ENCODE measurements at regions of chr20 and their contacts with region 1.

Region 1: DNA sequence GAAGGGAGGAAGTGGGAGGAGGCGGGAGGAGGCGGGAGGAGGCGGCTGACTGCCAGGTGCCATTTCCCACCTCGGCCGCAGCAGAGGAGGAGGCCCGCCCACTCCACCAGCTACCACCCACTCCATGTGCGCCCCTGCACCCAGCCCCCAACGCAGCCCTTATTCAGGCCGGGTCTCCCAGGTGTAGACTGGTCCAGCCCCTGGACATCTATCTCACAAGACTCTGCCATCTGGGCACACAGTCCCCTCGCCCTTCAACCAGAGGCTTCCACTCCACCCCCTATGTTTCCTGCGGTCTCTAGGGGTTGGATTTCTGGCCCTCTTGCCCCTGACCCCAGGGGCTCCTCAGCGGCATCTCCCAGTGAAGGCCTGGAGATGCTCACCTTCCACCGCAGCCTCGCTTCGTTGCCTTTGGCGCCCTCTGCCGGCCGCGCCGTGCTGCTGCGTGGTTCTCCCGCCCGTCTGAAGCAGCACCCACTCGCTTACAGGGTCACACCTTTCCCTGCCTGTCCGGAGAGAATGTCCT is 32.6 kb upstream of the FAM83D start:
- DNase-seq: peak; percentile 88
- ATAC-seq: peak; percentile 79
- H3K4me3 ChIP-seq: no peak overlapping the region
- H3K4me3 Mint-ChIP-seq: peak overlapping the region; percentile 64
- H3K27ac ChIP-seq: peak overlapping the region; percentile 74 to 78
- H3K27ac Mint-ChIP-seq: peak overlapping the region; percentile 89
- H3K4me1 ChIP-seq: peaks cover 22 to 52% of the 10 kb centered on the region in 2 donors
- H3K4me1 Mint-ChIP-seq: peaks cover 57% of the 10 kb centered on the region
- H3K27me3 ChIP-seq: no peaks in the 10 kb centered on the region
- H3K27me3 Mint-ChIP-seq: no peaks in the 10 kb centered on the region
- CTCF ChIP-seq: peak; percentile 91

Region 2: DNA sequence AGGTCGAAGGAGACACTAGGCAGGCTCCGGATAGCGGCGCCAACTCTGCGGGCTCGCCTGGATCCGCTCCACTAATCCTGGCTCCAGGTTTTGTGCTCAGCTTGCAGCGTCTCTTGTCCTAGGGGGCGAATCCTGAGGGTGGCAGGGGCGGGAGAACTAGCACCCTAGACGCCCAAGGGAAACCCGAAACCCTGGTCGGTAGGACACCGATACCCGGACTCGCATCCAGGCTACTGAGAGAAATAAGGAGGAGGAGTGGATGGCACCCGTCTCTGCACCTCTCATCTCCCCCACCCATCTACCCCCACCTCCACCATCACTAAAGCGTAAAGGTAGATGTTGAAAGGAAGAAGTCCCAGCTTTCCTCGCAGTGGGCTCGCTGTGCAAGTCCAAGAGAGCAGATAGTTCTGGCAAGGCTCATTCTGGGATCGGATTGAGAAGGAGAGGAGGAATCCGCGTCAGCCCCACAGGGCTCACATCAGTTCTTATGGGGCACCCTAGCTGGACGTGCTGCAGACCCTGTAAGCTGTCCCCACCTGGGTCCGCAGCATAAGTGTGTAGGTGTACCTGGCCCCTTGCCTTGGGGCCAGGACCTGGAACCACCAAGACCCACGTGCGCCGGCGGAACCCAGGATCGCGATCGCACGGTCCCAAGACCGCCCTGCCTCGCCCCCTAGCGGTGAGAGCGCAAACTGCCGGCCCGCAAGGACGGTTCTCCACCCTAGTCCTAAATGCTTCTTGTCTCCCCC is 162.5 kb before region 1 on chr20:
- CTCF ChIA-PET with region 1: interaction called, 14 read pairs
- POLR2A ChIA-PET with region 1: no interaction called
- intact Hi-C with region 1: loop called (anchors 1 kb)
- DNase-seq: peak; percentile 81
- ATAC-seq: peak; percentile 76
- H3K4me3 ChIP-seq: peak overlapping the region in 4 of 5 experiments; percentile 18 to 40 (median 28)
- H3K4me3 Mint-ChIP-seq: peak overlapping the region; percentile 69
- H3K27ac ChIP-seq: no peak overlapping the region
- H3K27ac Mint-ChIP-seq: peak overlapping the region; percentile 77
- H3K4me1 ChIP-seq: peaks cover 59 to 74% of the 10 kb centered on the region in 2 donors
- H3K4me1 Mint-ChIP-seq: peaks cover 51% of the 10 kb centered on the region
- H3K27me3 ChIP-seq: peaks cover 0 to 97% (median 86%) of the 10 kb centered on the region in 4 experiments
- H3K27me3 Mint-ChIP-seq: peaks cover 89% of the 10 kb centered on the region
- CTCF ChIP-seq: peak; percentile 97

Region 3: DNA sequence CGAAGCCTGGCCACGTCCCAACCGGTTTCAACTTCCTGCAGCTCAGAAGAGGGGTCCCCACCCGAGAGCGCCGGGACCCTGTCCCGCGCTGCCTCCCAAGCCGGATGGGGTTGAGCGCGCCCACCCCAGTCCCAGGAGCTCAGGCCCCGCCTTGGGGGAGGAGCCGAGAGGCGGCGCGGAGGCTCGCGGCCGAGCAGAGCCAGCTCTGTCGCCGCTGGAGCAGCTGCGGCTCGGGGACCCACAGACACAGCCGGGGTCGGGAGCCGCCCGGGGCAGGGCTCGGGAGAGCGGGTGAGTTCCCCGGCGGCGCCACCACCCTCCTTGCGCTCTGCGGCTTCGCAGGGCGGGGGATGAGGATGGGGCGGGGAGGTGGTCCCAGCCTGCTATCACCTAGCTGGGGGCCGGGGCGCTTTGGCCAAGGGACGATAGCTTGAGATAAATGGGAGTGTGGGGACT is 88.1 kb before region 1 on chr20 and contains the start of gene PPP1R16B:
- CTCF ChIA-PET with region 1: interaction called, 141 read pairs
- POLR2A ChIA-PET with region 1: interaction called, 43 read pairs
- intact Hi-C with region 1: loop called (anchors 1 kb)
- DNase-seq: peak; percentile 85
- ATAC-seq: peak; percentile 75
- H3K4me3 ChIP-seq: peak within 1 kb of the TSS; percentile 17 to 99 (median 95)
- H3K4me3 Mint-ChIP-seq: peak within 1 kb of the TSS; percentile 95
- H3K27ac ChIP-seq: peak within 1 kb of the TSS; percentile 99
- H3K27ac Mint-ChIP-seq: peak within 1 kb of the TSS; percentile 96
- H3K4me1 ChIP-seq: peaks cover 49 to 55% of the 10 kb centered on the region in 2 donors
- H3K4me1 Mint-ChIP-seq: peaks cover 53% of the 10 kb centered on the region
- H3K27me3 ChIP-seq: no peaks in the 10 kb centered on the region
- H3K27me3 Mint-ChIP-seq: no peaks in the 10 kb centered on the region
- CTCF ChIP-seq: no peak
- total RNA-seq, gene PPP1R16B: 108 and 112 TPM in 2 replicates

Region 4: GRCh38 chr20:38825901-38826625 is 67.6 kb before region 1 on chr20:
- CTCF ChIA-PET with region 1: interaction called, 15 read pairs
- POLR2A ChIA-PET with region 1: no interaction called
- intact Hi-C with region 1: loop called (anchors 5 kb)
- DNase-seq: no peak
- ATAC-seq: no peak
- H3K4me3 ChIP-seq: no peak overlapping the region
- H3K4me3 Mint-ChIP-seq: no peak overlapping the region
- H3K27ac ChIP-seq: peak overlapping the region in 1 of 2 donors; percentile 60
- H3K27ac Mint-ChIP-seq: peak overlapping the region; percentile 51
- H3K4me1 ChIP-seq: peaks cover 39 to 42% of the 10 kb centered on the region in 2 donors
- H3K4me1 Mint-ChIP-seq: peaks cover 88% of the 10 kb centered on the region
- H3K27me3 ChIP-seq: no peaks in the 10 kb centered on the region
- H3K27me3 Mint-ChIP-seq: no peaks in the 10 kb centered on the region
- CTCF ChIP-seq: no peak

Region 5: GRCh38 chr20:38842558-38842981 is 51.1 kb before region 1 on chr20:
- CTCF ChIA-PET with region 1: interaction called, 114 read pairs
- POLR2A ChIA-PET with region 1: interaction called, 13 read pairs
- intact Hi-C with region 1: loop called (anchors 1 kb)
- DNase-seq: peak; percentile 95
- ATAC-seq: peak; percentile 99
- H3K4me3 ChIP-seq: peak overlapping the region in 2 of 5 experiments; percentile 12 to 48
- H3K4me3 Mint-ChIP-seq: peak overlapping the region; percentile 83
- H3K27ac ChIP-seq: peak overlapping the region; percentile 92 to 96
- H3K27ac Mint-ChIP-seq: peak overlapping the region; percentile 99
- H3K4me1 ChIP-seq: peaks cover 79 to 88% of the 10 kb centered on the region in 2 donors
- H3K4me1 Mint-ChIP-seq: peaks cover 88% of the 10 kb centered on the region
- H3K27me3 ChIP-seq: no peaks in the 10 kb centered on the region
- H3K27me3 Mint-ChIP-seq: no peaks in the 10 kb centered on the region
- CTCF ChIP-seq: no peak

Region 6: GRCh38 chr20:38863024-38863851 is 30.4 kb before region 1 on chr20:
- CTCF ChIA-PET with region 1: interaction called, 84 read pairs
- POLR2A ChIA-PET with region 1: interaction called, 4 read pairs
- intact Hi-C with region 1: loop called (anchors 1 kb)
- DNase-seq: peak; percentile 91
- ATAC-seq: peak; percentile 78
- H3K4me3 ChIP-seq: peak overlapping the region in 4 of 5 experiments; percentile 15 to 39 (median 18)
- H3K4me3 Mint-ChIP-seq: peak overlapping the region; percentile 68
- H3K27ac ChIP-seq: peak overlapping the region; percentile 97
- H3K27ac Mint-ChIP-seq: peak overlapping the region; percentile 86
- H3K4me1 ChIP-seq: peaks cover 83 to 98% of the 10 kb centered on the region in 2 donors
- H3K4me1 Mint-ChIP-seq: peaks cover 90% of the 10 kb centered on the region
- H3K27me3 ChIP-seq: no peaks in the 10 kb centered on the region
- H3K27me3 Mint-ChIP-seq: no peaks in the 10 kb centered on the region
- CTCF ChIP-seq: no peak

Region 7: DNA sequence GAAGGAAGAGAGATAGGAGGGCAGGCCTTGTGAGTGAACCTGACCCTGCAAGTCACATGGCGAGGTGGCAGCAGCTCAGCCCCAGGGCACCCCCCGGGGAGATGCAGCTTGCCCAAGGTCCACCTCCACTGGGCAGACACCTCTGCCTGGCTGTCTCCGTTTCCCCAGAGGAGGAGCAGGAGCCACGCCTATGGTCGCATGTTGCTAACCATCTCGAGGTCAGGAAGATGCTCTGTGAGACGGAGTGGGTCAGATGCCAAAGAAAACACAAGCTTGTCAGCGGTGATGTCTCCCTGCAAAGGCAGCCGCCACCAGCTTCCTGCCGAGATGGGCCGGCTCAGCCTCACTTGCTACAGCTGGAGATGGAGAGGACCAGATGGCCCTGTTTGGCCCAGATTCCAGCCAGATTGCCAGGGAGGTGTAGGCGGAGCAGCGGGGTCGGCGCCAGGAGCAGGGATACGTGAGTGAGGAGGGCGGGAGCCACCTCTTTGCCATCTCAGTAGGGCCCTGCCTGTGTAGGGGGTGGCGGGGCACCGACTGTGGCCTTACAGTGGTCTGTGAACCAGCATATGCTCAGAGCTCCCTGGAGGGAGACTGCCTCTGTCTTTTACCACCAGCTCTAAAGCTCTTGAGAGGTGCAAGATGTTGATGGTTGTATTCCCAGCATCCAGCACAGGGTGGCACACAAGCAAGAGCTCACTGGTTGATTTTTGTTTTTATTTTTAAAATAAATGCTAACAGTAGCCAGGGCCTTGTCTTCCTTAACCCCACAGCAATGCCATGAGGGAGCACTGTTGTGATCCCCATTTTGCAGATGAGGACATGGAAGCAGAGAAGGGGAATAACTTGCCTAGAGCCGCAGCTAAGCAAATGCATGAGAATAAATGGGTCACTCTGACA is 10.3 kb before region 1 on chr20:
- CTCF ChIA-PET with region 1: interaction called, 74 read pairs
- POLR2A ChIA-PET with region 1: interaction called, 20 read pairs
- intact Hi-C with region 1: no loop called
- DNase-seq: no peak
- ATAC-seq: no peak
- H3K4me3 ChIP-seq: no peak overlapping the region
- H3K4me3 Mint-ChIP-seq: peak overlapping the region; percentile 82
- H3K27ac ChIP-seq: peak overlapping the region; percentile 66 to 99
- H3K27ac Mint-ChIP-seq: peak overlapping the region; percentile 94
- H3K4me1 ChIP-seq: peaks cover 90 to 99% of the 10 kb centered on the region in 2 donors
- H3K4me1 Mint-ChIP-seq: peaks cover 92% of the 10 kb centered on the region
- H3K27me3 ChIP-seq: no peaks in the 10 kb centered on the region
- H3K27me3 Mint-ChIP-seq: no peaks in the 10 kb centered on the region
- CTCF ChIP-seq: no peak

Measured in B cell (primary cell).